K562 (cell line): ENCODE measurements at regions of chrX and their contacts with region 1.

Region 1: GRCh38 chrX:123960042-123960611 is 1.4 kb upstream of the STAG2 start:
- DNase-seq: peak; percentile 86 to 94 (median 90)
- ATAC-seq: peak; percentile 80
- H3K4me3 ChIP-seq: peak overlapping the region; percentile 95
- H3K27ac ChIP-seq: peak overlapping the region; percentile 99
- H3K4me1 ChIP-seq: peaks cover 4 to 5% of the 10 kb centered on the region in 2 experiments; a peak in 2 of 5 replicates
- H3K27me3 ChIP-seq: no peaks in the 10 kb centered on the region
- CTCF ChIP-seq: peak; percentile 74 to 99 (median 99)
- EP300 ChIP-seq: no peak
- POLR2A ChIP-seq: peak; percentile 77
- RAD21 ChIP-seq: peak; percentile 80 to 84

Region 2: DNA sequence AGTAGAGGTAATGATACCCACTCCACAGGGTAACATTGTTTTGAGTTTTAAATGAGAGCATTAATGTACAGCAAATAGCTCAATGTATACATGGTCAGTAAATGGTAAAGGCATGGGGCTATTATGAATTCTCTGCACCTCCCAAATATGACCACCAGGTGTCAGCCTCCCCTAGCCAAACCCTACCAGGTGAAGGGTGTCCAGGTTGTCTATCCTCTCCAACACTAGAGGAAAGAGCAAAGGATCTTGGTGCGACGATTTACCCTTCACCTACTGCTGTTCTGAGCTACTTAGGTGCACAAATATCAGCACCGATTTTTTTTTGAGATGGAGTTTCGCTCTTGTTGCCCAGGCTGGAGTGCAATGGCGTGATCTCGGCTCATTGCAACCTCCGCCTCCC is 126.7 kb before region 1 on chrX:
- CTCF ChIA-PET with region 1: interaction called, 3 read pairs
- POLR2A ChIA-PET with region 1: interaction called, 4 read pairs
- in situ Hi-C with region 1: loop called (anchors 5 kb)
- intact Hi-C with region 1: loop called (anchors 1 kb)
- DNase-seq: peak; percentile 68 to 77 (median 70)
- ATAC-seq: peak; percentile 97
- H3K4me3 ChIP-seq: no peak overlapping the region
- H3K27ac ChIP-seq: no peak overlapping the region
- H3K4me1 ChIP-seq: no peaks in the 10 kb centered on the region; a peak in 2 of 5 replicates
- H3K27me3 ChIP-seq: no peaks in the 10 kb centered on the region
- CTCF ChIP-seq: peak; percentile 78 to 90 (median 81)
- EP300 ChIP-seq: no peak
- POLR2A ChIP-seq: no peak
- RAD21 ChIP-seq: peak; percentile 90 to 93

Region 3: DNA sequence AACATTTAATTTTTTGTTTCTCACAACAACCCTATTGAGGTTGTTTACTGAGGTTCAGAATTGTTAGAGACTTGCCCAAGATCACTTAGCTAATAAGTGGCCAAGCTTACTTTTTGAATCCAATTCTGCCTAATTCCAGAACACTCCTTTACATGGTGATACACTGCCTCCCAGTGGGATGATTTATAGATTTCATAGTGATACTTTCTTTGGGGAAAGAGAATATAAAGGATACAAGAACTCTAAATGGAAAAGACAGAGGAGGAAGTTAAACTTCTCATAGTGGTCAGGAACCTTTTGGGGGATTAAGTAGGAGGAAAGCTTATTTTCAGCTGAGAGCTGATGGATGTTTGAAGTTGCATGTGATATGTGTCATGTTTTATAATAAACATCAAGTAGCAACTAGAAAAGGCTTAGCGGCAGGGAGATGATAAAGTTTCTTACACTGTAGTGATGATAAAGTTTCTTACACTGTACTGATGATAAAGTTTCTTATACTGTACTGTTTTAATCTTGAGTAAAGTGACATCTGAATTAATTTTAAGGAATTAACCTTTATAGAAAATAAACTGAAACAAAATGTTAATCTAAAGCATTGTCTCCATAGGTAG is 16.7 kb after region 1 on chrX:
- CTCF ChIA-PET with region 1: interaction called, 21 read pairs
- POLR2A ChIA-PET with region 1: interaction called, 14 read pairs
- in situ Hi-C with region 1: no loop called
- intact Hi-C with region 1: loop called (anchors 1 kb)
- DNase-seq: peak in 2 of 4 experiments; percentile 25 to 53
- ATAC-seq: peak; percentile 73
- H3K4me3 ChIP-seq: no peak overlapping the region
- H3K27ac ChIP-seq: no peak overlapping the region
- H3K4me1 ChIP-seq: peaks cover under 1 to 6% of the 10 kb centered on the region in 2 experiments; a peak in 4 of 5 replicates
- H3K27me3 ChIP-seq: no peaks in the 10 kb centered on the region
- CTCF ChIP-seq: peak; percentile 39 to 62 (median 45); a peak in 4 of 6 replicates
- EP300 ChIP-seq: no peak
- POLR2A ChIP-seq: no peak
- RAD21 ChIP-seq: peak; percentile 66 to 69

Region 4: GRCh38 chrX:123993326-123993725 is 33.2 kb after region 1 on chrX:
- CTCF ChIA-PET with region 1: no interaction called
- POLR2A ChIA-PET with region 1: no interaction called
- in situ Hi-C with region 1: no loop called
- intact Hi-C with region 1: no loop called
- DNase-seq: no peak
- ATAC-seq: no peak
- H3K4me3 ChIP-seq: no peak overlapping the region
- H3K27ac ChIP-seq: no peak overlapping the region
- H3K4me1 ChIP-seq: peaks cover 0 to 20% of the 10 kb centered on the region in 2 experiments; a peak in 3 of 5 replicates
- H3K27me3 ChIP-seq: no peaks in the 10 kb centered on the region
- CTCF ChIP-seq: no peak
- EP300 ChIP-seq: no peak
- POLR2A ChIP-seq: no peak
- RAD21 ChIP-seq: no peak

Region 5: DNA sequence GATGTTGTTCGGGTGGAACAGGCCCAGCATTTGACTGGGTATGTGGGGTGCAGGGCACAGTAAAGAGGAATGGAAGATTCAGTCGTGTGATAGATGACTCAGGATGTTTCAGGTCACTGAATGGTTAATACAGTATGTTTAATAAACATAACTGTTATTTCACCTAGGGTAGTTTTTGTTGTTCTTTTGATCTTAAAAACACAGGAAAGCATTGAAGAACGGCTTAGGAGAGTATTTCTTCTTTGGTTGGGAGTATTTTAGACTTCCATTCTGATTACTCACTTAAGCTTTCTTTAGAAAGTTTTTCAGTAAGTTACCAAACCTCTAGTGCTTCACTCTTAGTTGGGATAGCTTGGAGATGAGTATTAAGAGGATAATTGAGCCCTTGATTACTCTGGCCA is 63.7 kb after region 1 on chrX:
- CTCF ChIA-PET with region 1: no interaction called
- POLR2A ChIA-PET with region 1: no interaction called
- in situ Hi-C with region 1: no loop called
- intact Hi-C with region 1: loop called (anchors 2 kb)
- DNase-seq: no peak
- ATAC-seq: peak; percentile 78
- H3K4me3 ChIP-seq: no peak overlapping the region
- H3K27ac ChIP-seq: peak overlapping the region; percentile 62; the same call in 2 of the 3 replicates
- H3K4me1 ChIP-seq: peaks cover 0 to 10% of the 10 kb centered on the region in 2 experiments; a peak in 2 of 5 replicates
- H3K27me3 ChIP-seq: no peaks in the 10 kb centered on the region
- CTCF ChIP-seq: no peak
- EP300 ChIP-seq: no peak
- POLR2A ChIP-seq: no peak
- RAD21 ChIP-seq: no peak

Region 6: DNA sequence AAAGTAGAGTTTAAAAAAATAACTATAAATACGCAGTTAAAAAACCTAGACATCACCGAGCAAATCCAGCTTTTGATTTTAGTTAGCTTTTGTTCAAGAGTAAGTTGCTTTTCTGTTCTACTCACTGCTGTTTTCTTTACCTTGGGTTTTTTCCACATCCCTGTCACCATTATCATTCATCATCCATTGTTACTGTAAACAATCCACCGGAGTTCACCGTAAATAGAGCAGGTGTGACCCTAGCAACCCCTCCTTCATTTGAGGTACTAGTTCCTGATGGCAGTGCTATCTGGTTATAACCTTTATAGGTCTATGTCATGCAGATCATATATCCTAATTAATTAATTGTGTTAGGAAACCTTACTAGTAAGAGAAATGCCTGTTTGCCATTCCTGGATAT is 329.3 kb after region 1 on chrX:
- CTCF ChIA-PET with region 1: no interaction called
- POLR2A ChIA-PET with region 1: no interaction called
- in situ Hi-C with region 1: no loop called
- intact Hi-C with region 1: no loop called
- DNase-seq: no peak
- ATAC-seq: no peak
- H3K4me3 ChIP-seq: no peak overlapping the region
- H3K27ac ChIP-seq: no peak overlapping the region
- H3K4me1 ChIP-seq: no peaks in the 10 kb centered on the region
- H3K27me3 ChIP-seq: no peaks in the 10 kb centered on the region
- CTCF ChIP-seq: no peak
- EP300 ChIP-seq: no peak
- POLR2A ChIP-seq: no peak
- RAD21 ChIP-seq: no peak

Region 7: DNA sequence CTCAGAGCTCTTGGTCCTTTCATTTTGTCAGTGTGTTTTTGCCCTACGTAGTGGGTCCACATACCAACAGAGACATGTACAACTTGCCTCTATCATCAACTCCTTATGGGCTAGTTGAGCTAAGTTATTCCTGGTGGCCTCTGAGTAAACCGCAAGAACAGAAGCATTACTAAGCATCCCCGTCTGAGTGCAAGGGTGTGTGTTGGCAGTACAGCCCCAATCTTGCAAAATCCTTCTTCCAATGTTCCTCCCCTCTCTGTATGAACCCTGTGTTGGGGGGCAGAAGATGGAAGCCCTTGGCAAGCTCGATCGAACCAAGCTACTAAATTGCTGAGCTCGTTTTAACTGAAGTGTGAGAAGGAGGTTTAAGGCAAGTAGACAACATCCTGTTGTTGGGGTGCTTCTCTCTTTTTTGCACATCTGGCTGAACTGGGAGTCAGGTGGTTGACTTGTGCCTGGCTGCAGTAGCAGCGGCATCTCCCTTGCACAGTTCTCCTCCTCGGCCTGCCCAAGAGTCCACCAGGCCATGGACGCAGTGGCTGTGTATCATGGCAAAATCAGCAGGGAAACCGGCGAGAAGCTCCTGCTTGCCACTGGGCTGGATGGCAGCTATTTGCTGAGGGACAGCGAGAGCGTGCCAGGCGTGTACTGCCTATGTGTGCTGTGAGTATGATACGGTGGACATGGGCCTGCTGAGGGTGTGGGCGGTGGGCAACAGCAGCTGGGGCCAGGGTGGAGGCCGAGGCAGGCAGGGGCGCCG is 386.2 kb after region 1 on chrX and contains the start of gene SH2D1A:
- CTCF ChIA-PET with region 1: no interaction called
- POLR2A ChIA-PET with region 1: no interaction called
- in situ Hi-C with region 1: no loop called
- intact Hi-C with region 1: loop called (anchors 5 kb)
- DNase-seq: peak in 2 of 4 experiments; percentile 29 to 56
- ATAC-seq: peak; percentile 49
- H3K4me3 ChIP-seq: no peak within 1 kb of the TSS
- H3K27ac ChIP-seq: peak within 1 kb of the TSS; percentile 14; the same call in 2 of the 3 replicates
- H3K4me1 ChIP-seq: peaks cover 14 to 42% of the 10 kb centered on the region in 2 experiments; a peak in 4 of 5 replicates
- H3K27me3 ChIP-seq: no peaks in the 10 kb centered on the region
- CTCF ChIP-seq: no peak
- EP300 ChIP-seq: no peak
- POLR2A ChIP-seq: no peak
- RAD21 ChIP-seq: no peak
- polyA plus RNA-seq, gene SH2D1A: 0.11 to 0.35 TPM